IMR-90 (cell line): ENCODE measurements at regions of chr19 and their contacts with region 1.

Region 1: GRCh38 chr19:10960314-10961072 is at the start of gene SMARCA4:
- DNase-seq: peak; percentile 96
- ATAC-seq: peak; percentile 94
- H3K4me3 ChIP-seq: peak within 1 kb of the TSS; percentile 94
- H3K27ac ChIP-seq: peak within 1 kb of the TSS; percentile 99
- H3K4me1 ChIP-seq: peaks cover 9% of the 10 kb centered on the region
- H3K27me3 ChIP-seq: no peaks in the 10 kb centered on the region
- CTCF ChIP-seq: no peak
- POLR2A ChIP-seq: peak; percentile 89
- RAD21 ChIP-seq: no peak
- total RNA-seq, gene SMARCA4: 41.4 and 53.3 TPM in 2 replicates

Region 2: DNA sequence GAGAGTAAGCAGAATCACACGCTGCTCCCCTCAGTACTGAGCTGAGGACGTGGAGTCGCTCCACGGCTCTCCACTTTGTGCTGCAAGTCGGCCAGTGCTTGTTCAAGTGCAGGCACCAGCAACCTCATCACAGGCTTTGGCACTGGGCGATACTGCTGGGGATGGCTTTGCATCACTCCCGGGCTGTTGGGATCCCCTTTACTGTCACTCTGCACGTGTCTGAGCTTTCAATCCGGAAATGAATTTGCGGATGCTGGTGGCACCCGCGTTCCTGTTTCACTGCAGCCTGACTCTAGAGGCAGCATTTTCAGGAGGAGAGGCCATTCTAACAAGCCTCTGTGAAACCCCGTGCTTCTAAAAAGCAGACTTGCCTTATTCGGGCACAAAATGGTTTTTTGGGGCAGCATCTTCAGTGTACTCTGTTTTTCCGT is 19.5 kb after region 1 on chr19:
- CTCF ChIA-PET with region 1: no interaction called
- POLR2A ChIA-PET with region 1: no interaction called
- dilution Hi-C with region 1: no loop called
- in situ Hi-C with region 1: no loop called
- intact Hi-C with region 1: loop called (anchors 2 kb)
- DNase-seq: no peak
- ATAC-seq: no peak
- H3K4me3 ChIP-seq: no peak overlapping the region
- H3K27ac ChIP-seq: no peak overlapping the region
- H3K4me1 ChIP-seq: peaks cover 16% of the 10 kb centered on the region
- H3K27me3 ChIP-seq: no peaks in the 10 kb centered on the region
- CTCF ChIP-seq: no peak
- POLR2A ChIP-seq: no peak
- RAD21 ChIP-seq: no peak

Region 3: DNA sequence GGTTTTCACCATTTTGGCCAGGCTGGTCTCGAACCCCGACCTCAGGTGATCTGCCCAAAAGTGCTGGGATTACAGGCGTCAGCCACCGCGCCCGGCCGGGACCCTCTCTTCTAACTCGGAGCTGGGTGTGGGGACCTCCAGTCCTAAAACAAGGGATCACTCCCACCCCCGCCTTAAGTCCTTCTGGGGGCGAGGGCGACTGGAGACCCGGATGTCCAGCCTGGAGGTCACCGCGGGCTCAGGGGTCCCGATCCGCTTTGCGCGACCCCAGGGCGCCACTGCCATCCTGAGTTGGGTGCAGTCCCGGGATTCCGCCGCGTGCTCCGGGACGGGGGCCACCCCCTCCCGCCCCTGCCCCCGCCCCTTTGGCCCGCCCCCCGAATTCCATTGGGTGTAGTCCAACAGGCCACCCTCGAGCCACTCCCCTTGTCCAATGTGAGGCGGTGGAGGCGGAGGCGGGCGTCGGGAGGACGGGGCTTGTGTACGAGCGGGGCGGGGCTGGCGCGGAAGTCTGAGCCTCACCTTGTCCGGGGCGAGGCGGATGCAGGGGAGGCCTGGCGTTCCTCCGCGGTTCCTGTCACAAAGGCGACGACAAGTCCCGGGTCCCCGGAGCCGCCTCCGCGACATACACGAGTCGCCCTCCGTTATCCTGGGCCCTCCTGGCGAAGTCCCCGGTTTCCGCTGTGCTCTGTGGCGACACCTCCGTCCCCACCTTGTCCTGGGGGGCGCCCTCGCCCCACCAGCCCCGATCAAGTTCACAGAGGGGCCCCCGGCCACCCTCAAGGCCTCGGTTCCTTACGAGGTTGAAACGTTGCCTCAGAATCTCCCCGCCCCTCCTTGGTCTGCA is 129.8 kb after region 1 on chr19:
- CTCF ChIA-PET with region 1: no interaction called
- POLR2A ChIA-PET with region 1: no interaction called
- dilution Hi-C with region 1: no loop called
- in situ Hi-C with region 1: no loop called
- intact Hi-C with region 1: no loop called
- DNase-seq: peak; percentile 92
- ATAC-seq: peak; percentile 82
- H3K4me3 ChIP-seq: peak overlapping the region; percentile 73
- H3K27ac ChIP-seq: peak overlapping the region; percentile 96
- H3K4me1 ChIP-seq: peaks cover 10% of the 10 kb centered on the region
- H3K27me3 ChIP-seq: no peaks in the 10 kb centered on the region
- CTCF ChIP-seq: no peak
- POLR2A ChIP-seq: peak; percentile 88
- RAD21 ChIP-seq: no peak

Region 4: DNA sequence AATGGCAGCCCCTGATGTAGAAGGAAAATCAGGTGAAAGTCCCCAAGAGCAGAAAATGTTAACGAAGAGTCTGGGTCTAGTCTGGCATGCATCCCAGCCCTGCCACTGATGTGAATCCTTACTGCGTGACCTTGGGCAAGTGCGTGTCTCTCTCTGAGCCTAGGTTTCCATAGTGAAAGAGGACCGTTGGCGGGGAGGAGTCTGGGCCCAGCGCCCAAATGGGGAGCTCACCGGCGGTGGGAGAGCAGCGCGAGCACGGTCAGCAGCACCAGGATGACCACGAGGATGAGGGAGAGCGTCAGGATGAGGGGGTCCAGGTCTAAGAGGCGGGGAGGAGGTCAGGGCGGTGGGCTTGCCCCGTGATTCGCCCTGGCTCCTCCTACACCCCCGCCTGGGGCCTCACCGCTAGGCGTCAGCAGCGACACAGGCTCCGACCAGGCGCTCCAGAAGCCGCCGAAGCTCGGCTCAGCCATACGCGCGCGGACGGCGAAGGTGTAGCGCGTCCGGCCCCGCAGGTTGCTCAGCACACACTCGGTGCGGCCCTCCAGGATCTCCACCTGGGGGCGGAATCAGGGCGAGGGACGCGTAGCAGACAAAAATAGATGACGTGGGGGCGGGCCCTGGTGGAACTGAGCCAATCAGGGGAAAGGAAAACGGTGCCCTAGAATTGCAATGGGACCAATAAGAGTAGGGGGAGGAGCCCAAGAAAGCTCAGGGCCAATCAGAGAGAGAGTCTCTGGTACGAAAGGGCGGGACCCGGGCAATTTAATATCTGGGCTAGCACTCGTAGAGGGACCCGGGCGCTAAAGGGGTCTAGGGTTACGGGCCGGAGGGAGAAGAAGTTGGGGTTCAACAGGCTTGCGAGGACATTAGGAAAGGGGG is 420.4 kb after region 1 on chr19:
- CTCF ChIA-PET with region 1: no interaction called
- POLR2A ChIA-PET with region 1: no interaction called
- dilution Hi-C with region 1: no loop called
- in situ Hi-C with region 1: no loop called
- intact Hi-C with region 1: no loop called
- DNase-seq: peak; percentile 93
- ATAC-seq: peak; percentile 88
- H3K4me3 ChIP-seq: peak overlapping the region; percentile 86
- H3K27ac ChIP-seq: peak overlapping the region; percentile 62
- H3K4me1 ChIP-seq: peaks cover 20% of the 10 kb centered on the region
- H3K27me3 ChIP-seq: no peaks in the 10 kb centered on the region; the same call in 1 of the 2 replicates
- CTCF ChIP-seq: peak; percentile 53
- POLR2A ChIP-seq: peak; percentile 91
- RAD21 ChIP-seq: peak; percentile 43; the same call in 1 of the 2 replicates